ENCODE measurements at regions of chr3 and their contacts with region 1.

Region 1: DNA sequence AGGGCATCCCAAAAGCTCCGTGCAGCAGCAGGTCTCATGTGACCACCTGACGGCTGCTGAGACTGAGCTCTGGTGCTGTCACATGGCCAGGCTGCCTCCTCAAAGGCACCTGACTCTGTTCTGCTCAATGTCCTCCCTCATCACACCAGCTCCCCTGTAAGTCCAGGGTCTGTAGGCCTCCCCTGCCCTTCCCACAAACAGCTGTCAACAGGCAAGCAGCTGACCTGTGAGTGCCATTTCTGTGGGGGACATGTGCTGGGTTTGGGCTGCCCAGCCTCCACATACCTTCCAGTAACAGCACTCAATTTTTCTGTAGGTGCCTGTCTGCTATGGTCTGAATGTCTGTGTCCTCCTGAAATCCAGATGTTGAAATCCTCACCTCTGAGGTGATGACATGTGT is 11.2 kb downstream of the NUP210 start:
- DNase-seq: no peak
- ATAC-seq: no peak
- H3K4me3 Mint-ChIP-seq: no peak overlapping the region
- H3K27ac Mint-ChIP-seq: peak overlapping the region in 5 of 10 donors; percentile 13 to 52 (median 36)
- H3K4me1 Mint-ChIP-seq: peaks cover 15 to 69% (median 60%) of the 10 kb centered on the region in 4 donors
- H3K27me3 Mint-ChIP-seq: no peaks in the 10 kb centered on the region

Region 2: GRCh38 chr3:13419505-13420044 is 10.7 kb after region 1 on chr3:
- POLR2A ChIA-PET with region 1: interaction called, 21 read pairs
- DNase-seq: peak; percentile 43 to 70 (median 60)
- ATAC-seq: peak; percentile 44 to 67
- H3K4me3 Mint-ChIP-seq: peak overlapping the region; percentile 87 to 95 (median 91)
- H3K27ac Mint-ChIP-seq: peak overlapping the region; percentile 91 to 99 (median 96)
- H3K4me1 Mint-ChIP-seq: peaks cover 33 to 72% (median 66%) of the 10 kb centered on the region in 4 donors
- H3K27me3 Mint-ChIP-seq: no peaks in the 10 kb centered on the region